HEK293 (cell line): ENCODE measurements at regions of chr20 and their contacts with region 1.

Region 1: GRCh38 chr20:47725248-47725973 is 59.9 kb downstream of the SULF2 start:
- H3K4me3 ChIP-seq: no peak overlapping the region
- H3K27ac ChIP-seq: no peak overlapping the region
- H3K4me1 ChIP-seq: peaks cover 7% of the 10 kb centered on the region
- CTCF ChIP-seq: peak; percentile 71

Region 2: DNA sequence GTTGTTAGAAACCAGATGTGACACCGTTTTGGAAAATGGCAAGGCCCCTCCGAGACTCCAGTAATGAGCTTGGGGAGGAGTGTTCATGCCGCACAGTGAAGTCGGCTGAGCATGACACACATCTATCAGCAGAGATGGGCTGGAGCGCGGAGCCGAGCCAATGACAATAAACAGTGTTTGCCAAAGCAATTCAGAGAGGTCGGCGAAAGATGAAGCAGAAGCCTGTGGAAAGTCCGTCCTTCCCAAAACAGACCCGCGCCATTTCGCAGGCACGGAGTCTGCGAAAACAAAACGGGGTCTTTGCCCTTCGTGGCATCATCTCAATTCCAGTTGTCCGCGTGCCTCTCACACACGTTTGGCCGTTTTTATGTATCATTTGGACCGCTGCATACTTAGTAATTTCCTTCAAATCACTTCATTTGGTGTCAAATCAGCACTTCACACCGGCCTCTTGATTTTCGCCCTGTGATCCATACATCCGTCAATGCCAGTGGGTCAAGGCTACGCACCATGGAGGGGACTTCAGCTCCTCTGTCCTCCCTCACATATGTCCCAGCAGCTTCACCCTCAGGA is 11.4 kb before region 1 on chr20:
- CTCF ChIA-PET with region 1: interaction called, 12 read pairs
- POLR2A ChIA-PET with region 1: no interaction called
- H3K4me3 ChIP-seq: no peak overlapping the region
- H3K27ac ChIP-seq: no peak overlapping the region
- H3K4me1 ChIP-seq: no peaks in the 10 kb centered on the region
- CTCF ChIP-seq: no peak

Region 3: DNA sequence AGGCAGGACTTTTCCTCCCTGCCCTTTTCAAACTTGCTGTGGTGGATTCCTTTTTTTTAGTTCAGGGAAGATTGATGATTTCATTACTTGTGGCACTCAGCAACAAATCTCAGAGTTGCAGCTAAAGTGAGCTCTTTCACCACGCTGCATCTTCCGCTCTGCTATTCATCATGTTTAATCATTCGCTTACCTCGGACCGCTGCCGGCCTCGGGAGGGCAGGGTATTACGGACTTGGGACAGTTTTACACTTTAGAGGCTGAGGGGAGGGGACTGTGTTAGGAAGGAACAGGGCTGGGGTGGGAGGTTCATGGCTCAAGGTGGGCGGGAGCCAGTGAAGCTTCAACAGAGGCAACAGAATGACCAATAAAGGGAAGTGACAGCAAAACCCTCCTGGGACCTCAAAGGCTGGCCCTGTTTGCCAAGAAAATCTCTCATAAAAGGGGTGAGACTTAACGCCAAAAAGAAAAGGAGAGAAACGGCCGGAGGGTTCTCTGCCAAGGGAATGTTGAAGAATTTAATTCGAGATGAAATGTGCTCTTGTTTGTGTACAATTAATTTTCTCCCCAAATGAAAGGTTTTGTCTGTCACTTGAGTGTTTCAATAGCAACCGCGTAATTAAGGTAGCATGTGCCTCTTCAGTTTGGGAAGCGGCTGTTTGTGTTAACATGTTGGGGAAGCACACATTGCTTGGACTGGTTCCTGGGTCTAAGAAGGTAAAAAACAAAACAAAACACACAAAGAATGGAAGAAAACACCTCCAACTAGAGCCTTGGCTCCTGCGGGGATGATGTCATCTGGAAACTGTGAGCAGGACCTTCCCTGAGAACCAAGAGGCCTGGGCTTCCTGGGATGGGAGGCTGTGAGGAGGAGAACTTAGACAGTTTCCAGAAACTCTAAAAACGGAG is 132.4 kb after region 1 on chr20:
- CTCF ChIA-PET with region 1: no interaction called
- POLR2A ChIA-PET with region 1: no interaction called
- H3K4me3 ChIP-seq: no peak overlapping the region
- H3K27ac ChIP-seq: no peak overlapping the region
- H3K4me1 ChIP-seq: no peaks in the 10 kb centered on the region; the same call in 1 of the 2 replicates
- CTCF ChIP-seq: no peak